Ovary (tissue), 10 donors: ENCODE measurements at regions of chr1 and their contacts with region 1.

Region 1: DNA sequence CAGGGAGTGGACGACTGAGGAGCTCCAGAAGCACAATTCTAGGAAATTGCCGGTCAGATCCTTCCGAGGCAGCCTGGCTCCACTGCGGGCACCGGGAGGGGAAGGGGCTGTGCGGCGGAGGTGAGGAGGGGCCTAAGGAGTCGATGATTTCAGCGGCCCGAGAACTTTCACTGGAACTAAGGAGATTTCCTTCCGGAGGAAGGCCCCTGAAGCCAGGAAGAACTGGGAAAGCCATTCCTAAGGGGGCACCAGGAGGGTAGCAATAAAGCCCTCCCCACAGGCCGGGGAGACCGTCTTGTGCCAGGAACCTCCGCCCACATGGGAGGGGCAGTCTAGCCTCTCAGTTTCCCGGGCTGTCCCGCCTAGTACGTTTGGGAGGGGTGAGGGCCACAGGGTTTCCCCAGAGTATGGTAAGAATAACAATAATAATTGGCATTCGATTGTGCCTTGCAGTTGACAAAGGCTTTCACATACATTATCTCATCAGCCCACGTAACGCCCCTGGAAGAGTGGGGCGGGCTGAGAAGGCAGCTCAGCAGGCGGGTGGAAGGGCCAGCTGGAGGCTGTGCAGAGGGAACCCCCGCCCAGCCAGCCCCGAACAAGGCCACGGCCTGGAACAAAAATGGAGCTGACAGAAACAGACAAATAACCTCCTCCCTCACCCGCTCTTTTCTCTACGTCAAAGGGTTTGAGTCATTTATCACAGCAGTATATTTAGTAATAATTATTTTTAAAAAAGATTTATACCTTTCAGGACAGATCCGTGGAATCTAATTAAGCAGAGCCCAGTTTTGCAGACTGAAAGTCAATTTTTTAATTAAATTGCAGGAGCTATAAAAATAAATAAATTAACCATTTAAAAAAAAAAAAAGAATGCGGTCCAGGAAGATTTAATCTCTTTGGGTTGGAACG is 19.8 kb downstream of the NPR1 start:
- DNase-seq: peak; percentile 80 to 86 (median 82)
- H3K4me3 ChIP-seq: no peak overlapping the region
- H3K27ac ChIP-seq: peak overlapping the region; percentile 81 to 92
- H3K4me1 ChIP-seq: peaks cover 23% of the 10 kb centered on the region
- H3K27me3 ChIP-seq: no peaks in the 10 kb centered on the region
- CTCF ChIP-seq: no peak
- EP300 ChIP-seq: no peak
- POLR2A ChIP-seq: no peak

Region 2: DNA sequence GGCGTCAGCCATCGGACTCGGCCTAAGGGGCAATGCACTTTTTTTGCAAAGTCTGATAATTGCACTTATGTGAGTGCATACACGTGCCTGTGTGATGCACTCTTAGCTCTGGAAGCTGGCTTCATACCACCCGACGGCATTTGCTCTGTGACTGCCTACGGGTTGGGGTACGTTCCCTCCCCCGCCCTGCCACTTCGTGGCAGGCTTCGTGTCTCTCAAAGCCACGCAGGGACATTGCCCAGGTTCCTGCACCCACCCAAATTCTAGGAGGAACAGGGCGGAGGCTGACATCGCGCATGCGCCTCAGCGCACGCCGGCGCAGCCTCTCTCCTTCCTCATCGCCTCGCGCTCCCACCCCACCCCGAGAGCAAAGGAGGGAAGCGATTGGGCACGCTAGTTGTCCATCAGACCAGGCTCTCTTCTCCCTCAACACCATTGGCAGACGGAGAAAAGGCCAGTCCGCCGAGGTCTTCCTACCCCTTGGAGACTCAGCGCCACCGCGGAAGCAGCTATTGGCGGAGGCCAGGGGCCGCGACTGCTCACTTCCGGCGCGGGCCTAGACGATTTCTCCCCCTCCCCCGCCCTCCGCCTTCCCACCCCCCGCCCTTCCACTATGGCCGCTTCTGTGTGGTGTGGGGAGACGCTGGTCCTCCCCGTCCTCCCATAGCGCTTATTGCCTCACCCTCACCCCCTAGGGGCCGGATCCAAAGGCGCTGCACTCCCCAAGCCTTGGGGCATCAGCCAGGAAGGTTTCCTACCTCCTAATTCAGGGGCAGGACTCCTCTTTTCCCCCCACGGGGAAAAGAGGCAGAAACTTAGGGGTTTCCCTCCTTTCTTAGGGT is 29.4 kb after region 1 on chr1 and contains the start of gene INTS3:
- intact Hi-C with region 1: loop called in 1 of 4 experiments (anchors 2 kb)
- DNase-seq: peak; percentile 99 to 100 (median 99)
- H3K4me3 ChIP-seq: peak within 1 kb of the TSS; percentile 74
- H3K27ac ChIP-seq: peak within 1 kb of the TSS; percentile 90 to 94
- H3K4me1 ChIP-seq: peaks cover 2% of the 10 kb centered on the region
- H3K27me3 ChIP-seq: no peaks in the 10 kb centered on the region
- CTCF ChIP-seq: no peak
- EP300 ChIP-seq: no peak
- POLR2A ChIP-seq: peak; percentile 69
- total RNA-seq, gene INTS3: 49.5 to 74.4 (median 58.6) TPM

Region 3: GRCh38 chr1:153742411-153743142 is 44.3 kb after region 1 on chr1:
- intact Hi-C with region 1: loop called in 1 of 4 experiments (anchors 5 kb)
- DNase-seq: peak in 3 of 5 donors; percentile 34 to 41 (median 38)
- H3K4me3 ChIP-seq: no peak overlapping the region
- H3K27ac ChIP-seq: peak overlapping the region; percentile 57 to 72
- H3K4me1 ChIP-seq: peaks cover 10% of the 10 kb centered on the region
- H3K27me3 ChIP-seq: no peaks in the 10 kb centered on the region
- CTCF ChIP-seq: no peak
- EP300 ChIP-seq: no peak
- POLR2A ChIP-seq: no peak